ENCODE measurements at regions of chr10 and their contacts with region 1.

Region 1: GRCh38 chr10:70146489-70147258 is at the start of gene TYSND1:
- DNase-seq: peak; percentile 97 to 98
- H3K4me3 ChIP-seq: peak within 1 kb of the TSS; percentile 70 to 96 (median 75)
- H3K27ac ChIP-seq: peak within 1 kb of the TSS; percentile 85 to 94
- H3K4me1 ChIP-seq: peaks cover 0 to 5% of the 10 kb centered on the region in 2 donors
- H3K27me3 ChIP-seq: no peaks in the 10 kb centered on the region
- CTCF ChIP-seq: peak; percentile 46 to 78 (median 51)
- POLR2A ChIP-seq: peak; percentile 58
- total RNA-seq, gene TYSND1: 12.5 to 19.9 (median 19.7) TPM

Region 2: DNA sequence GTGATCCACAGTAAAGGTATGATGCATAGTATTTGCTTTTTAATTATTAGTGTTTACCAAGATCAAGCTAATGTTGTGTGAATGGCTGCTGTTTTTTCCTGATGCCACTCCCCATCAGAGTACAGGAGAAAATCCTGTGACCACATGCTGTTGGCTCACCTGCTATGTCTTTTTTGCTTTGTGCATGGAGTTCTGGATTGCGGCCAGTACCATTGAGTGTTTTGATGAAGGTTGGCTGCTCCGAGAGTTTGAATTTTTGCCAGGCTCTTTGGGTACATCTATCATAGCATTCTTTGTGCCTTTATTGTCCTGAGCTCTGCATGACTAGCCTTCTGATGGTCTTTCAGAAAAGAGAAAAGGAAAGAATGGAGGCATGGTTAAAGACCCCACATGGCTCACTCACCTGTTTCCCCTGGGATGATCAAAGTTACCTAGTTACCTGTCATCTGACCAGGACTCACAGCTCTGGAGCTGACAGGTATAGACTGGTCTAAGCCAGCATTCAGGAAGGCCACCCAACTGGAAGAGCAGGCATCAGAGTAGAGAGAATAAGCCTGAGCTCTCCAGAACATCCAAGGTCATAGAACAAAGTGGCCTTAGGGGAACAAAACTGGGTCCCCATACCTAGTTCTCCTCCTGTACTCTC is 657.2 kb after region 1 on chr10:
- intact Hi-C with region 1: loop called (anchors 5 kb)
- DNase-seq: peak in 1 of 2 donors; percentile 77
- H3K4me3 ChIP-seq: no peak overlapping the region
- H3K27ac ChIP-seq: peak overlapping the region; percentile 1 to 59
- H3K4me1 ChIP-seq: no peaks in the 10 kb centered on the region
- H3K27me3 ChIP-seq: no peaks in the 10 kb centered on the region
- CTCF ChIP-seq: no peak
- POLR2A ChIP-seq: no peak